CD8-positive, alpha-beta T cell (primary cell): ENCODE measurements at regions of chr3 and their contacts with region 1.

Region 1: GRCh38 chr3:32334675-32335074 is 57.0 kb upstream of the CMTM7 start:
- DNase-seq: peak in 8 of 9 experiments; percentile 29 to 66 (median 37)
- ATAC-seq: peak; percentile 81
- H3K4me3 ChIP-seq: no peak overlapping the region
- H3K4me3 Mint-ChIP-seq: no peak overlapping the region
- H3K27ac ChIP-seq: no peak overlapping the region
- H3K27ac Mint-ChIP-seq: peak overlapping the region; percentile 89
- H3K4me1 ChIP-seq: peaks cover 18% of the 10 kb centered on the region
- H3K4me1 Mint-ChIP-seq: peaks cover 28% of the 10 kb centered on the region
- H3K27me3 ChIP-seq: no peaks in the 10 kb centered on the region
- H3K27me3 Mint-ChIP-seq: no peaks in the 10 kb centered on the region
- CTCF ChIP-seq: no peak

Region 2: DNA sequence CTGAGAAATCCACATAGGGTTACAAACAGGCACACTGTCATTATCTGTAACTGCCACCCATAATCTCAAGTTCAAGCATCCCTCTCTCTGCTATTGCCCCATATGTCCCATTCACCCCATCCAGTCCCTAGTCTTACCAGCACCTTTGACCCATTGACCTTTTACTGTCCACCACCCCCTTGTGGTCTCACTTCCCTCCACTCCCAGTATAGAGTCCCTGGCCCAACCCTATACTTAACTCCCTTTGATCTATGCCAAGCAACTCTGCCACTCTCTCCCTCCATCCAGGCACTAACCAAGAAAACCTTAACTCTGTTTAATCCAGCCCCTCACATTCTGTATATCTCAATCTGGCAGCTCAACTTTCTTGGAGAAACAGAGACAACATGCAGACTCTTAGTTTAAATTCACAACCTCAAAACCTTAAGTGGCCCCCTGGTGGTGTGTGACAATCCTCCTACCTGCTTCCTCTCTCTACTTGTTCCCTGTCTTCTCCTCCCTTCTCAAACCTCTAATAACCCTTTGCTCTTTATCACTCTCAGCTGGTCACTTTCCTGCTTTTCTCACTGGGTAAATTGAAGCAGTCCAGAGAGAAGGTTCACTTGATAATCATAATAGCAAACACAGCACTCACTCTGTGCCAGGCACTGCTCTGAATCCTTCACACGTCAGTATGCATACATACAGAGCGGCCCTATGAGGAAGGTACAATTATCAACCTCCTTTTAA is 639.2 kb before region 1 on chr3:
- CTCF ChIA-PET with region 1: no interaction called
- POLR2A ChIA-PET with region 1: no interaction called
- intact Hi-C with region 1: no loop called
- DNase-seq: peak in 4 of 9 experiments; percentile 22 to 44 (median 28)
- ATAC-seq: no peak
- H3K4me3 ChIP-seq: no peak overlapping the region
- H3K4me3 Mint-ChIP-seq: no peak overlapping the region
- H3K27ac ChIP-seq: no peak overlapping the region
- H3K27ac Mint-ChIP-seq: no peak overlapping the region
- H3K4me1 ChIP-seq: peaks cover 4% of the 10 kb centered on the region
- H3K4me1 Mint-ChIP-seq: no peaks in the 10 kb centered on the region
- H3K27me3 ChIP-seq: no peaks in the 10 kb centered on the region
- H3K27me3 Mint-ChIP-seq: no peaks in the 10 kb centered on the region
- CTCF ChIP-seq: no peak

Region 3: DNA sequence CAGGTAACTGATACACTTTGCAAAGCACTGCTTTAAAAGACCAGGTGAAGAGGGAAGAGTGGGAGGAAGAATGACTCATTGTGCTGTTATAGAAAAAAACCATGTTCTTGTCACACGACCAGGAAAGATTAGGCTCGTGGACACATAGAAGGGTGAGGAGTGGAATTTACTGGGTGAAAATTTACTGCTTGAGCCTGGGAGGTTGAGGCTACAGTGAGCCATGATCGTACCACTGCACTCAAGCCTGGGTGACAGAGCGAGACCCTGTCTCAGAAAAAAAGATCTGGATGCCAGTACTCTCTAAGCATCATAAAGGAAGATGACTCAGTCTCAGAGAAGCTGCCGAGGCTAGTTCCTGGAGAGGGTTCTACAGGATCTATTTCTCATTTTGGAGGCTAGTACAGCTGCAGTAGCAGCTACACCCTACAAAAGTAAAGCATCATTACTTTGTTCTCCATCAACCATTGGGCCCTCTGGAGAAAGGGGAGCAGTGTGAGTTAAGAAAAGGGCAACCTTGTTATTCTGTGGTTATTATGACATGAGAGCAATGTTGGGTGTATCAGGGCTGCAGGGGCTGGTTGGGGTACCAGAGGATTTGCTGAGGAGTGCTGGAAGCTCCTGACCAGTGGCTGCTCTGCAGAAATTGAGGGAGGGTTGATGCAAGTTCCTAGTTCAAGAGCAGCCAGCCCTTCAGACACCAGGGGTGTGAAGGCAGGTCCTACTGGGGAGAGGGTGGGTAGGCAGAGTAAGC is 20.8 kb before region 1 on chr3:
- CTCF ChIA-PET with region 1: interaction called, 10 read pairs
- POLR2A ChIA-PET with region 1: interaction called, 6 read pairs
- intact Hi-C with region 1: no loop called
- DNase-seq: peak in 1 of 9 experiments; percentile 30
- ATAC-seq: peak; percentile 61
- H3K4me3 ChIP-seq: no peak overlapping the region
- H3K4me3 Mint-ChIP-seq: no peak overlapping the region
- H3K27ac ChIP-seq: no peak overlapping the region
- H3K27ac Mint-ChIP-seq: peak overlapping the region; percentile 15
- H3K4me1 ChIP-seq: no peaks in the 10 kb centered on the region
- H3K4me1 Mint-ChIP-seq: peaks cover 16% of the 10 kb centered on the region
- H3K27me3 ChIP-seq: no peaks in the 10 kb centered on the region
- H3K27me3 Mint-ChIP-seq: no peaks in the 10 kb centered on the region
- CTCF ChIP-seq: no peak